Caco-2 (cell line): ENCODE measurements at regions of chr12 and their contacts with region 1.

Region 1: DNA sequence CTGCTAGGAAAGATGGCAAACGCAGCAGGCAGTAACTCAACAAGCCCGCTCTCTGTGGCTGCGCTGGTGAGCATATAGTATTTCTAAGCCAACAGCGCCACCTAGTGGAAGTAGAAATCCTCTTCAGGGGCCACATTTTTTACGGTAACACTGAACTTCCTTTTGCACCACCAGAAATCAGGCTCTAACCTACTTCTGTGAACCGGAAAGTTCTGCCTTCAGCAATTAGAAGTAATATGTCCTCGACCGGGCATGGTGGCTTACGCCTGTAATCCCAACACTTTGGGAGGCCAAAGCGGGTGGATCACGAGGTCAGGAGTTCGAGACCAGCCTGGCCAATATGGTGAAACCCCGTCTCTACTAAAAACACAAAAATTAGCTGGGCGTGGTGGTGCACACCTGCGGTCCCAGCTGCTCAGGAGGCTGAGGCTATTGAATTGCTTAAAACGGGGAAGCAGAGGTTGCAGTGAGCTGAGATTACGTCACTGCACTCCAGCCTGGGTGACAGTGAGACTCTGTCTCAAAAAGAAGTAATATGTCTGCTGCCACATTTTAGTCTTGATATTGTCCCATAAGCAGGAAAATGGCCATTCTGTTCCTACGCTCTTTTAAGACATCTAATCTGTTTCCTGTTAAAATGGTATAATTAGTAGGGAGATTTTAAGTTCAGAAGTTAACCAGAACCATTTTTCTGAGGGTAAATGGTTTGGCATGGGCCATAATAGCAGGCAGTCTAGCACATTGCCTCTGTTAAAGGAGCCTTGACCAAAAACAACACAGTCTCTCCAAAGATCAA is 26.8 kb downstream of the APOBEC1 start:
- DNase-seq: peak; percentile 82 to 87
- H3K4me3 ChIP-seq: no peak overlapping the region
- H3K4me3 Mint-ChIP-seq: peak overlapping the region; percentile 57
- H3K27ac Mint-ChIP-seq: peak overlapping the region; percentile 16
- H3K4me1 ChIP-seq: peaks cover 31% of the 10 kb centered on the region
- H3K4me1 Mint-ChIP-seq: peaks cover 35% of the 10 kb centered on the region
- H3K27me3 ChIP-seq: no peaks in the 10 kb centered on the region
- H3K27me3 Mint-ChIP-seq: no peaks in the 10 kb centered on the region
- CTCF ChIP-seq: peak; percentile 80 to 97

Region 2: DNA sequence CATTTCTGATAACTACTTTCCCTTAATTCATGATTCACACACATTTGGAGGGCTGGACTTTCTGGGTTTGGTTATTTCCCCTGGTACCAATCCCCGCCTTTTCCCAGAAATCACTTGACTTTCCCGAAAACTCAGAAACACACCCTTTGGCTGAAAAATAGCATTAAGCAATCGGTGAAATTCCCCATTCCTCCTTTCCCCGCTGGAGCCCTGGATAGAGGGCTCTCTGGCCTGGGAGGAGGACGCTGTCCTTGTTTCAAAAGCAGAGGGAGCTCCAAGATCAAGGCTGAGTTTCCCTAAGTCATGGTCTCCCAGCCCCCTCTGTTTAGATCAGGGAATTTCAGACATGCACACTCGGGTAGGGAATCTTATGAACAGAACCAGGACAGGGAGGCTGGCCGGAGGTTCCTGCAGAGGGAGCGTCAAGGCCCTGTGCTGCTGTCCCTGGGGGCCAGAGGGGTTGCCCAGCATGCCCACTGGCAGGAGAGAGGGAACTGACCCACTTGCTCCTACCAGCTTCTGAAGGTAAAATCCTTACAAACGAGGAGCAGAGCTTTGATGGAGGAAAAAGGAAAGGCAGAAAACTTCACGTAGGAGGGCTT is 578.5 kb before region 1 on chr12 and contains the start of gene C1S:
- CTCF ChIA-PET with region 1: no interaction called
- POLR2A ChIA-PET with region 1: no interaction called
- intact Hi-C with region 1: loop called (anchors 1 kb)
- DNase-seq: peak; percentile 78 to 81
- H3K4me3 ChIP-seq: no peak within 1 kb of the TSS
- H3K4me3 Mint-ChIP-seq: no peak within 1 kb of the TSS
- H3K27ac Mint-ChIP-seq: peak within 1 kb of the TSS; percentile 38
- H3K4me1 ChIP-seq: peaks cover 20% of the 10 kb centered on the region
- H3K4me1 Mint-ChIP-seq: peaks cover 21% of the 10 kb centered on the region
- H3K27me3 ChIP-seq: no peaks in the 10 kb centered on the region
- H3K27me3 Mint-ChIP-seq: no peaks in the 10 kb centered on the region
- CTCF ChIP-seq: peak; percentile 80 to 86
- total RNA-seq, gene C1S: 5.3 and 6.1 TPM in 2 replicates

Region 3: GRCh38 chr12:7219599-7220243 is 419.2 kb before region 1 on chr12:
- CTCF ChIA-PET with region 1: no interaction called
- POLR2A ChIA-PET with region 1: no interaction called
- intact Hi-C with region 1: loop called (anchors 1 kb)
- DNase-seq: peak; percentile 80 to 85
- H3K4me3 ChIP-seq: no peak overlapping the region
- H3K4me3 Mint-ChIP-seq: no peak overlapping the region
- H3K27ac Mint-ChIP-seq: no peak overlapping the region
- H3K4me1 ChIP-seq: no peaks in the 10 kb centered on the region
- H3K4me1 Mint-ChIP-seq: no peaks in the 10 kb centered on the region
- H3K27me3 ChIP-seq: no peaks in the 10 kb centered on the region
- H3K27me3 Mint-ChIP-seq: no peaks in the 10 kb centered on the region
- CTCF ChIP-seq: peak; percentile 91 to 99

Region 4: GRCh38 chr12:7265243-7265642 is 373.7 kb before region 1 on chr12:
- CTCF ChIA-PET with region 1: no interaction called
- POLR2A ChIA-PET with region 1: no interaction called
- intact Hi-C with region 1: no loop called
- DNase-seq: no peak
- H3K4me3 ChIP-seq: no peak overlapping the region
- H3K4me3 Mint-ChIP-seq: no peak overlapping the region
- H3K27ac Mint-ChIP-seq: no peak overlapping the region
- H3K4me1 ChIP-seq: no peaks in the 10 kb centered on the region
- H3K4me1 Mint-ChIP-seq: no peaks in the 10 kb centered on the region
- H3K27me3 ChIP-seq: no peaks in the 10 kb centered on the region
- H3K27me3 Mint-ChIP-seq: peaks cover 17% of the 10 kb centered on the region
- CTCF ChIP-seq: no peak

Region 5: DNA sequence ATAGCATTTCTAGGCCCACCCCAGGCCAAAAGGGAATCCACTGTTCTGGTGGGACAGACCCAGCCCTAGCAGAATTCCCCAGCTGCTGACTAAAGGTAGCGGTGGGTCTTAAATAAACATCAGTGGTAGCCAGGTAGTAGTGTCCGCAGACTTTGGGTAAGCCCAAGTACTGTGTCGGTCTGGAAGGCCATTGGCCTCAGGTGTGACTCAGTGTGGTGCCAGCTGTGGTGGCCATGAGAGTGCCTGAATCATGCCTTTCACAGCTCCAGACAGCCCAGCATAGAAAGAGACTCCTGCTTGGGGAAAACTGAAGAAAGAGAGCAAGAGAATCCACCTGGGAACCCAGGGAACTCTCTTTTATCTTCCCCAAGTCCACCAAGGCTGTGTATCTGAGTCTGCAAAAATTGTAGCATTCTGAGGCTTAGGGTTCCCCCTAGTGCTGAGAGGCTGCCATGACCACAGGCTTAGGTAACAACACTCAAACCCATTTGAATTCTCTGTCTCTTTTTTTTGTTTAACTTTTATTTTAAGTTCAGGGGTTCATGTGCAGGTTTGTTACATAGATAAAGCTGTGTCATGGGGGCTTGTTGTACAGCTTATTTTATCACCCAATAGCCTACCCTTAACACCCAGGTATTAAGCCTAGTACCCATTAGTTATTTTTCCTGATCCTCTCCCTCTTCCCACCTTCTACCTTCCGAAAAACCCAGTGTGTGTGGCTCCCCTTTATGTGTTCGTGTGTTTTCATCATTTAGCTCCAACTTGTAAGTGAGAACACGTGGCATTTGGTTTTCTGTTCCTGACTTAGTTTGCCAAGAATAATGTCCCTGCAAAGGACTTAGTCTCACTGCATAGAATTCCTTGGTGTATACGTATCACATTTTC is 178.3 kb before region 1 on chr12:
- CTCF ChIA-PET with region 1: no interaction called
- POLR2A ChIA-PET with region 1: no interaction called
- intact Hi-C with region 1: loop called (anchors 1 kb)
- DNase-seq: peak; percentile 64 to 82
- H3K4me3 ChIP-seq: no peak overlapping the region
- H3K4me3 Mint-ChIP-seq: no peak overlapping the region
- H3K27ac Mint-ChIP-seq: no peak overlapping the region
- H3K4me1 ChIP-seq: no peaks in the 10 kb centered on the region
- H3K4me1 Mint-ChIP-seq: no peaks in the 10 kb centered on the region
- H3K27me3 ChIP-seq: no peaks in the 10 kb centered on the region
- H3K27me3 Mint-ChIP-seq: peaks cover 4% of the 10 kb centered on the region
- CTCF ChIP-seq: peak; percentile 98 to 99

Region 6: DNA sequence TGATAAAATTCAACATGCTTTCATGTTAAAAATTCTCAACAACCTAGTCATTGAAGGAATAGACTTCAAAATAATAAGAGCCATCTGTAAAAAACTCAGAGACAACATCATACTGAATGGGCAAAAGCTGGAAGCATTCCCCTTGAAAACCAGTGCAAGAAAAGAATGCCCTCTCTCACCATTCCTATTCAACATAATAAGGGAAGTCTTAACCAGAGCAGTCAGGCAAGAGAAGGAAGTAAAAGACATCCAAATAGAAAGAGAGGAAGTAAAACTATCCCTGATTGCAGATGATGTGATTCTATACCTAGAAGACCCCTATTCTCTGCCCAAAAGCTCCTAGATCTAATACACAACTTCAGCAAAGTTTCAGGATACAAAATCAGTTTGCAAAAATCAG is 26.1 kb before region 1 on chr12:
- CTCF ChIA-PET with region 1: interaction called, 3 read pairs
- POLR2A ChIA-PET with region 1: no interaction called
- intact Hi-C with region 1: loop called (anchors 1 kb)
- DNase-seq: no peak
- H3K4me3 ChIP-seq: no peak overlapping the region
- H3K4me3 Mint-ChIP-seq: no peak overlapping the region
- H3K27ac Mint-ChIP-seq: no peak overlapping the region
- H3K4me1 ChIP-seq: no peaks in the 10 kb centered on the region
- H3K4me1 Mint-ChIP-seq: no peaks in the 10 kb centered on the region
- H3K27me3 ChIP-seq: no peaks in the 10 kb centered on the region
- H3K27me3 Mint-ChIP-seq: peaks cover 13% of the 10 kb centered on the region
- CTCF ChIP-seq: no peak

Region 7: DNA sequence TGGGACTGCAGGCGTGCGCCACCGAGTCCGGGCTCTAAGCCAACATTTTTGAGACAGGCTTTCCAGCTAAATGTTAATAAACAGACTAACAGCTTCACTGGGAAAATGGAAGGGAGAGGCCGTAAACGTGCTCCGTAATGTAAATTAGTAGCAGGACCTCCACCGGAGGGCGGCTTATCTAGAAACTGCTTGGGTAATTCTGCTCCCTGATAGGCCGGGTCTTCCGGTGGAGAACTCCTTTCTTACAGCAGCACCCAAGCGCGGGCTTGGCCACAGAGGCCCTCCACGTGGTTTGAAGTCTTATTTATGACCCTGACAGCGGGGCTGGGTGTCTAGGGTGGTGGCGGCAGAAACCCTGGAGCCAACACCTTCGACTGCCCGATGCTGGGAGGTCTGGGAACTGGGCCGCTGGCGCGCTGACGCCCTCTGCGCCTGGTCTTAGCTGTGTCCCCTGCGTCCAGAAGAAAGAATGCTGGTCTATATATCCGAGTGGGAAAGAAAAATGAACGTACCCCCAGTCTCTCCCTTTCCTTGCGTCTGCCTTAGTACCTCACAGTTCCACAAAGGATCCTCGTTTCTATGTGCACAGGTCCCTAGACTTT is 74.0 kb after region 1 on chr12:
- CTCF ChIA-PET with region 1: no interaction called
- POLR2A ChIA-PET with region 1: no interaction called
- intact Hi-C with region 1: no loop called
- DNase-seq: no peak
- H3K4me3 ChIP-seq: no peak overlapping the region
- H3K4me3 Mint-ChIP-seq: peak overlapping the region; percentile 50
- H3K27ac Mint-ChIP-seq: peak overlapping the region; percentile 36
- H3K4me1 ChIP-seq: peaks cover 40% of the 10 kb centered on the region
- H3K4me1 Mint-ChIP-seq: peaks cover 47% of the 10 kb centered on the region
- H3K27me3 ChIP-seq: no peaks in the 10 kb centered on the region
- H3K27me3 Mint-ChIP-seq: no peaks in the 10 kb centered on the region
- CTCF ChIP-seq: no peak

Region 8: GRCh38 chr12:7769999-7770398 is 131.0 kb after region 1 on chr12:
- CTCF ChIA-PET with region 1: no interaction called
- POLR2A ChIA-PET with region 1: no interaction called
- intact Hi-C with region 1: no loop called
- DNase-seq: no peak
- H3K4me3 ChIP-seq: no peak overlapping the region
- H3K4me3 Mint-ChIP-seq: no peak overlapping the region
- H3K27ac Mint-ChIP-seq: no peak overlapping the region
- H3K4me1 ChIP-seq: no peaks in the 10 kb centered on the region
- H3K4me1 Mint-ChIP-seq: peaks cover 6% of the 10 kb centered on the region
- H3K27me3 ChIP-seq: no peaks in the 10 kb centered on the region
- H3K27me3 Mint-ChIP-seq: no peaks in the 10 kb centered on the region
- CTCF ChIP-seq: no peak